Activated CD4-positive, alpha-beta memory T cell treated with anti-CD3 and anti-CD28 coated beads for 36 hours (primary cell): ENCODE measurements at regions of chr11 and their contacts with region 1.

Region 1: DNA sequence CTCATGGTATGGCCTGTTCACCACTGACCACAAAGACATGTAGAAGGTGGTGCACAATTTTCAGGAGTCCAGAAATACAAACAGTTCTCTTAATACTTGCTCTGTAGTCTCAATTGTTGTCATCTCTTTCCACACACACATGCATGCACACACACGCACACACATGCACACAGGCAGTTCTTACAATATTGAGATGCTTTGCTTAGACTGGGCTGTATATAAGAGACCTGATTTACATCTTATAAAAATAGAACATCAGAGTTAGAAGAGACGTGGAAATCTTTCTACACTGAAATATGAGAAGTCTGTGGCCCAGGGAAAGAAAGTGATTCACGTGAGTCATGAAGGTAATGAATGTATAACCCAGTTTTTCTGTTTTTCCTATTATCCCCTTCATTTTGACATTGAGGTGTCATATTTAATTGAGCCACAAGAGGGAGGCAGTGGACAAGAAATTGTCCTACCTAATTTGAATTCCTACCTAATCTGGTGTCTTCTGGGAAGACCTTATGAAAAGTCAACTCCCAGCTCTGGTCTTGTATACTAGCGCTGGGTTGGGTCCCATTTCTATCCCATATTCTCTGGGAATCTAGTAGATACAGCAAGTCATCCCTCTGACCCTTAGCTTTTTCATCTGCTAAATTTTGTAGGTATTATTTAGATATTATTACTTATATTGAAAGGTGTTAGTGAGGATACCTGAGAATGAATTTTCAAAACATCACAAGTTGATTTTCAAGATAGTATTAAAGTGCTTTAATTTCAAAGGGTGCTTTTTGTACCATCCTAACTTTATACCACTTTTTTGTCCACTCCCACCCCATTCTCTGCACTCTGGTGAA is 14.9 kb upstream of the MS4A4A start:
- DNase-seq: no peak
- H3K4me3 Mint-ChIP-seq: no peak overlapping the region
- H3K27ac Mint-ChIP-seq: no peak overlapping the region
- H3K4me1 Mint-ChIP-seq: no peaks in the 10 kb centered on the region
- H3K27me3 Mint-ChIP-seq: peaks cover 8% of the 10 kb centered on the region

Region 2: GRCh38 chr11:60305906-60306619 is 40.5 kb after region 1 on chr11:
- CTCF ChIA-PET with region 1: interaction called, 4 read pairs
- POLR2A ChIA-PET with region 1: no interaction called
- intact Hi-C with region 1: loop called (anchors 5 kb)
- DNase-seq: no peak
- H3K4me3 Mint-ChIP-seq: no peak overlapping the region
- H3K27ac Mint-ChIP-seq: no peak overlapping the region
- H3K4me1 Mint-ChIP-seq: peaks cover 2% of the 10 kb centered on the region
- H3K27me3 Mint-ChIP-seq: peaks cover 25% of the 10 kb centered on the region

Region 3: DNA sequence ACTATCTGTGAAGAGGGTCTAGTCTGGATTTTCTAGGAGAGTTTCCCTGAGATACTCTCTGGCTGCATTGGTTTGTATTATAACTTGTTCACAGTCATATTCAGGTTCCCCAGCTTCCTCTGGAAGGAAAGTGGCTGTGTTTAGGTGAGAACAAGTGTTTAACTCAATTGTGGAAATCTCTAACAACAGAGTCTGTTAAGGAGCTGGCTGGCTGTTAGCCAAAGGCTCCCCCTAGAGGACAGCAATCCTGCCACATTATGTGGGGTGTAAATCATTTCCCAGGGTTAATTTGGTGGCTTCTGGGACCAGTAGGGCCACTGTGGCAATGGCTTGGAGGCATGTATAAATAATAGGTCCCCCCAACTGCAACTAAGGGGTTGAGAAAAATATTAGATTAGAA is 79.9 kb after region 1 on chr11:
- CTCF ChIA-PET with region 1: interaction called, 17 read pairs
- POLR2A ChIA-PET with region 1: no interaction called
- intact Hi-C with region 1: loop called (anchors 1 kb)
- DNase-seq: peak; percentile 21
- H3K4me3 Mint-ChIP-seq: no peak overlapping the region
- H3K27ac Mint-ChIP-seq: no peak overlapping the region
- H3K4me1 Mint-ChIP-seq: no peaks in the 10 kb centered on the region
- H3K27me3 Mint-ChIP-seq: peaks cover 26% of the 10 kb centered on the region

Region 4: GRCh38 chr11:60485986-60486385 is 220.4 kb after region 1 on chr11:
- CTCF ChIA-PET with region 1: no interaction called
- POLR2A ChIA-PET with region 1: no interaction called
- intact Hi-C with region 1: loop called (anchors 5 kb)
- DNase-seq: peak; percentile 44
- H3K4me3 Mint-ChIP-seq: no peak overlapping the region
- H3K27ac Mint-ChIP-seq: no peak overlapping the region
- H3K4me1 Mint-ChIP-seq: peaks cover 8% of the 10 kb centered on the region
- H3K27me3 Mint-ChIP-seq: peaks cover 4% of the 10 kb centered on the region

Region 5: DNA sequence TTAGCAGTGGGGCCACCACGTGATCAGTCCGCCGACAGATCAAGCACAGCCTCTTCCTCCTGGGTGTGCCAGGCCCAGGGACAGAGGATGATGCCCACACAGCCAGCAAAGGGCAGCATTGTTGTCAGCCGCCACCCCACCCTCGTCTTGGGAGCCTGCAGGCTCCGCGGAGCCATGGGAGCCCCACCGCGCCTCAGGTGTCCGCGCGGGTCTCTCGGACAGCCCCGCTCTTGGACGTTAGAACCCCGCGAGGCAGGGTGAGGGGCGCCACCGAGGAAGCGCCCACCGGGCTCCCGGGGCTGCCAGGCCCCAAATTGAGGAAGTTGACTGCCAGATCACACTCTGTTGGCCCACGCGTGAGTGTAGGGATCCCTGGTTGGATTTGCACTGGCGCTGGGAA is 349.9 kb after region 1 on chr11:
- CTCF ChIA-PET with region 1: interaction called, 9 read pairs
- POLR2A ChIA-PET with region 1: no interaction called
- intact Hi-C with region 1: loop called (anchors 2 kb)
- DNase-seq: no peak
- H3K4me3 Mint-ChIP-seq: no peak overlapping the region
- H3K27ac Mint-ChIP-seq: no peak overlapping the region
- H3K4me1 Mint-ChIP-seq: no peaks in the 10 kb centered on the region
- H3K27me3 Mint-ChIP-seq: peaks cover 11% of the 10 kb centered on the region